Caco-2 (cell line): ENCODE measurements at regions of chr11 and their contacts with region 1.

Region 1: GRCh38 chr11:46700241-46701077 is at the starts of genes ARHGAP1 and ZNF408:
- DNase-seq: peak; percentile 99 to 100
- H3K4me3 ChIP-seq: peak within 1 kb of the TSS; percentile 87
- H3K4me3 Mint-ChIP-seq: peak within 1 kb of the TSS; percentile 96
- H3K27ac Mint-ChIP-seq: peak within 1 kb of the TSS; percentile 99
- H3K4me1 ChIP-seq: peaks cover 6% of the 10 kb centered on the region
- H3K4me1 Mint-ChIP-seq: peaks cover 7% of the 10 kb centered on the region
- H3K27me3 ChIP-seq: no peaks in the 10 kb centered on the region
- H3K27me3 Mint-ChIP-seq: no peaks in the 10 kb centered on the region
- CTCF ChIP-seq: no peak
- total RNA-seq, gene ARHGAP1: 67.1 and 73.0 TPM in 2 replicates
- total RNA-seq, gene ZNF408: 17.6 and 23.3 TPM in 2 replicates

Region 2: GRCh38 chr11:46554205-46555055 is 146.0 kb before region 1 on chr11:
- CTCF ChIA-PET with region 1: no interaction called
- POLR2A ChIA-PET with region 1: interaction called, 6 read pairs
- intact Hi-C with region 1: loop called (anchors 1 kb)
- DNase-seq: peak; percentile 72 to 86
- H3K4me3 ChIP-seq: no peak overlapping the region
- H3K4me3 Mint-ChIP-seq: peak overlapping the region; percentile 74
- H3K27ac Mint-ChIP-seq: peak overlapping the region; percentile 77
- H3K4me1 ChIP-seq: peaks cover 47% of the 10 kb centered on the region
- H3K4me1 Mint-ChIP-seq: peaks cover 32% of the 10 kb centered on the region
- H3K27me3 ChIP-seq: no peaks in the 10 kb centered on the region
- H3K27me3 Mint-ChIP-seq: no peaks in the 10 kb centered on the region
- CTCF ChIP-seq: no peak

Region 3: DNA sequence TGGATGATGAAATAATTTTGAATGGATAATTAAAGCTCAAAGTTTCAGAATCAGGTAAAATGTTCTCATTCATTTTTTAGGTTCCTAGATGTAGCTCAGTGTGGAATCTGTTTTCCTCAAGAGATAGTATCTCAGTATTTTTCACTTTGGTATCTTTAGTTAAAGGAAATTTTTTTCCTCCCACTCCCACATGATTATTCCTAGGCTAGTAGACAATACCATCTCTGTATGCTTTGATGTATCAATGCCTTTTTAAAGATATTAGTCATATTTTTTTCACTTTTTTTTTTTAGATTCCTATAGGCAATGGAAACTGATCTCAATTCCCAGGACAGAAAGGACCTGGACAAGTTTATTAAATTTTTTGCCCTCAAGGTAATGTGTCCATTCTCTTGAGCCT is 56.5 kb before region 1 on chr11:
- CTCF ChIA-PET with region 1: interaction called, 6 read pairs
- POLR2A ChIA-PET with region 1: interaction called, 17 read pairs
- intact Hi-C with region 1: no loop called
- DNase-seq: no peak
- H3K4me3 ChIP-seq: no peak overlapping the region
- H3K4me3 Mint-ChIP-seq: no peak overlapping the region
- H3K27ac Mint-ChIP-seq: no peak overlapping the region
- H3K4me1 ChIP-seq: peaks cover 21% of the 10 kb centered on the region
- H3K4me1 Mint-ChIP-seq: peaks cover 19% of the 10 kb centered on the region
- H3K27me3 ChIP-seq: no peaks in the 10 kb centered on the region
- H3K27me3 Mint-ChIP-seq: no peaks in the 10 kb centered on the region
- CTCF ChIP-seq: no peak

Region 4: GRCh38 chr11:46675288-46675851 is 25.1 kb before region 1 on chr11:
- CTCF ChIA-PET with region 1: no interaction called
- POLR2A ChIA-PET with region 1: interaction called, 13 read pairs
- intact Hi-C with region 1: no loop called
- DNase-seq: no peak
- H3K4me3 ChIP-seq: no peak overlapping the region
- H3K4me3 Mint-ChIP-seq: no peak overlapping the region
- H3K27ac Mint-ChIP-seq: peak overlapping the region; percentile 68
- H3K4me1 ChIP-seq: peaks cover 22% of the 10 kb centered on the region
- H3K4me1 Mint-ChIP-seq: peaks cover 12% of the 10 kb centered on the region
- H3K27me3 ChIP-seq: no peaks in the 10 kb centered on the region
- H3K27me3 Mint-ChIP-seq: no peaks in the 10 kb centered on the region
- CTCF ChIP-seq: no peak

Region 5: DNA sequence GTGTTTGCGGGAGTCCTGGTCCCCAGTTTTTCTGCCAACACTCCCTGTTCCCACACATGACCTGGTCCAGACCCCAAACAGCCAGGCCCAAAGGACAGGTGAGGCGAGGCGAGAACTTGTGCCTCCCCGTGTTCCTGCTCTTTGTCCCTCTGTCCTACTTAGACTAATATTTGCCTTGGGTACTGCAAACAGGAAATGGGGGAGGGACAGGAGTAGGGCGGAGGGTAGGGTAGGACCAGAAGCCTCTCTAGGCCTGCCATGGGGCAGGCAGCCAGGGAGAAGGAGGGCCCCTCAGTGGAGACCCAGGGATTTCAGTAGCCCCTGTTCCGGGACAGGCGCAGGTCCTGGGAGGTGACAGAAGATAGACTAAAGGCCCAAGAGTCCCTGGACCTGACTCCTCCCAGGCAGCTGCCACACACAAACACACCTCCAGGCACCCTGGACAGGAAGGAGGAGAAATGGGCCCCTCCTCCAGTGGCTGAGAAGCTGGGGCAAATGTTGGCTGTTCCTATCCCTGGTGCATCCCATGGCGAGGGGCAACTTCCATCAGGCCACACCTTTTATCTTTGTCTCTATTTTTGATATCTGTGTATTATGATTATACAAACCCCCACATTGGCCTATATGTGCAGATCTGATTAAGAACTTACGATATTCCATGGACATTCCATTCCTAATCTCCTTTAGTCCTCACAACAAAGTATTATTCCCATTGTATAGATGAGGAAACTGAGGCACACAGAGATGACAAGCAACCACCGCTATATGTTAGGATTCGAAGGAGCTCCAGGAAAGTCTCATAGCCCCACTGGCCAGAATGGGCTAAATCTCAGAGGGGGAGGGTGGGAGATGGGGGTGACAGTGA is 17.9 kb after region 1 on chr11:
- CTCF ChIA-PET with region 1: interaction called, 3 read pairs
- POLR2A ChIA-PET with region 1: interaction called, 14 read pairs
- intact Hi-C with region 1: loop called (anchors 1 kb)
- DNase-seq: peak; percentile 75 to 89
- H3K4me3 ChIP-seq: no peak overlapping the region
- H3K4me3 Mint-ChIP-seq: peak overlapping the region; percentile 68
- H3K27ac Mint-ChIP-seq: peak overlapping the region; percentile 92
- H3K4me1 ChIP-seq: peaks cover 34% of the 10 kb centered on the region
- H3K4me1 Mint-ChIP-seq: peaks cover 11% of the 10 kb centered on the region
- H3K27me3 ChIP-seq: no peaks in the 10 kb centered on the region
- H3K27me3 Mint-ChIP-seq: no peaks in the 10 kb centered on the region
- CTCF ChIP-seq: no peak

Region 6: GRCh38 chr11:46750126-46750525 is 49.7 kb after region 1 on chr11:
- CTCF ChIA-PET with region 1: no interaction called
- POLR2A ChIA-PET with region 1: no interaction called
- intact Hi-C with region 1: loop called (anchors 5 kb)
- DNase-seq: peak in 1 of 2 experiments; percentile 48
- H3K4me3 ChIP-seq: no peak overlapping the region
- H3K4me3 Mint-ChIP-seq: no peak overlapping the region
- H3K27ac Mint-ChIP-seq: no peak overlapping the region
- H3K4me1 ChIP-seq: peaks cover 17% of the 10 kb centered on the region
- H3K4me1 Mint-ChIP-seq: peaks cover 6% of the 10 kb centered on the region
- H3K27me3 ChIP-seq: no peaks in the 10 kb centered on the region
- H3K27me3 Mint-ChIP-seq: no peaks in the 10 kb centered on the region
- CTCF ChIP-seq: no peak

Region 7: DNA sequence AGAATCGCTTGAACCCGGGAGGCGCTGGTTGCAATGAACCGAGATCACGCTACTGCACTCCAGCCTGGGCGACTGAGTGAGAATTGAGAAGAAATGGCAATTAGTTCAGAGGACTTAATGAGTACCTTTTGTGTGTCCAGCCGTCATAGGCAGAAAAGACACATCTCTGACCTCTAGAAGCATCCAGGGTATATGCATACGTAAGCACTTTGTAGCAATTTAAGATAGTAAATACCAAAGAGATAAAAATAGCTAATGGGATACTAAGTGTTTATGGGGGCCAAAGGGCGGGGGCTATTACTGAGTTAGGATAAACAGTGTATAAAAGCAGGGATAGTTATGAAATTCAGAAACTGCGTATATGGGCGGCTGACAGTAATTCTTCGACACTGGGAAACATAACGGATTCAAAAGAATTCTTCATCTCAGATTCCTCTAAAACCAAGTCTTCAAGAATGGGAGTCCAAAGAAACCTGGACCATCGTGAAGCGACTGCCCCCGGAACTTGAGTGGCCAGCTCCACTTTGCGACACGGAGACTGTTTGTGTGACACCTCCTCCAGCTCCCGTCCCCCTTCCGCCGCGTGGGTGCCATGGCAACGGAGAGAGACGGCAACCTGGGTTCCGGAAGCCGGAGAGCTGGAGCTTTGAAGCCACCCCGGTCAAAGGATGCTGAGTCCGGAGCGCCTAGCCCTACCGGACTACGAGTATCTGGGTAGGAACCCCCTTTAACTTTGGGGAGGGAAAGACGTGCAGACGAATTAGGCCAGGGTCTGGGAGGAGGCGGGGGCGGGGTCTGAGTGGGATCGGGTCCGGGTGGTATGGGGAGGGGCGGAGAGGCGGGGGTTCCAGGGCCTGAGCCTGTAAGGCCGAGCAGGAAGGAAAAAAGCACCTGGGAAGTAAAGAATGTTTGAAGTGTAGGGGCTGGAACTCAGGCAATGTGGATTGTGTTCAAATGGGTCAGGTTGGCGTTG is 236.0 kb after region 1 on chr11 and contains the start of gene CSTPP1:
- CTCF ChIA-PET with region 1: no interaction called
- POLR2A ChIA-PET with region 1: interaction called, 10 read pairs
- intact Hi-C with region 1: no loop called
- DNase-seq: peak; percentile 97
- H3K4me3 ChIP-seq: peak within 1 kb of the TSS; percentile 83
- H3K4me3 Mint-ChIP-seq: peak within 1 kb of the TSS; percentile 75
- H3K27ac Mint-ChIP-seq: peak within 1 kb of the TSS; percentile 75
- H3K4me1 ChIP-seq: 0 out of 2 replicates have a peak, but pooled peaks cover 4% of the 10 kb centered on the region
- H3K4me1 Mint-ChIP-seq: peaks cover 7% of the 10 kb centered on the region
- H3K27me3 ChIP-seq: no peaks in the 10 kb centered on the region
- H3K27me3 Mint-ChIP-seq: peaks cover 3% of the 10 kb centered on the region
- CTCF ChIP-seq: no peak
- total RNA-seq, gene CSTPP1: 19.8 and 22.9 TPM in 2 replicates